Activated CD8-positive, alpha-beta T cell treated with anti-CD3 and anti-CD28 coated beads for 36 hours (primary cell): ENCODE measurements at regions of chr10 and their contacts with region 1.

Region 1: GRCh38 chr10:77721815-77722214 is 84.2 kb upstream of the KCNMA1 start:
- DNase-seq: no peak
- ATAC-seq: no peak
- H3K4me3 Mint-ChIP-seq: no peak overlapping the region
- H3K27ac Mint-ChIP-seq: no peak overlapping the region
- H3K4me1 Mint-ChIP-seq: peaks cover 2% of the 10 kb centered on the region
- H3K27me3 Mint-ChIP-seq: peaks cover 1% of the 10 kb centered on the region
- CTCF ChIP-seq: no peak

Region 2: GRCh38 chr10:77837240-77837924 is 115.6 kb after region 1 on chr10:
- CTCF ChIA-PET with region 1: interaction called, 24 read pairs
- POLR2A ChIA-PET with region 1: interaction called, 3 read pairs
- intact Hi-C with region 1: loop called (anchors 5 kb)
- DNase-seq: peak; percentile 89
- ATAC-seq: peak; percentile 91
- H3K4me3 Mint-ChIP-seq: no peak overlapping the region
- H3K27ac Mint-ChIP-seq: no peak overlapping the region
- H3K4me1 Mint-ChIP-seq: peaks cover 6% of the 10 kb centered on the region
- H3K27me3 Mint-ChIP-seq: no peaks in the 10 kb centered on the region
- CTCF ChIP-seq: peak; percentile 33

Region 3: GRCh38 chr10:78081292-78081691 is 359.5 kb after region 1 on chr10:
- CTCF ChIA-PET with region 1: no interaction called
- POLR2A ChIA-PET with region 1: no interaction called
- intact Hi-C with region 1: no loop called
- DNase-seq: no peak
- ATAC-seq: no peak
- H3K4me3 Mint-ChIP-seq: no peak overlapping the region
- H3K27ac Mint-ChIP-seq: no peak overlapping the region
- H3K4me1 Mint-ChIP-seq: no peaks in the 10 kb centered on the region
- H3K27me3 Mint-ChIP-seq: no peaks in the 10 kb centered on the region
- CTCF ChIP-seq: no peak